ENCODE measurements at regions of chr11 and their contacts with region 1.

Region 1: DNA sequence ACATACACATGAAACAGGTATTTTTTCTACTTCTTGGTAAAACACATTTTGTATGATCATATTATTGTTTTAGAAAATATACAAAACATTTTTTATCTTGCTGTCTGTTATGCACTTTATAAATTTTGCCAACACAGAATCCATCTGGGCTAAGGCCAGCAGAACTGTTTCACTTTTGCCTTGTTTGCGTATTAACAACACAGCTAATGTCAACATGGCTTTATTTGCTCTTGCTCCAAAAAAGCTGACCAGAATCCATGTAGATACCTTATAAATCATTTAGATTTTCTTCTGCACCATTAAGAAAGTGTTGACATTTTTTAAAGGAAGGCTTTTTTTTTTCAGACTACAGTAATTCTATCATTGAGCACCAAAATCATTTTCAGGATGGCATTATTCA is 58.1 kb upstream of the PGR start:
- DNase-seq: no peak
- H3K4me3 ChIP-seq: no peak overlapping the region
- H3K4me3 Mint-ChIP-seq: no peak overlapping the region
- H3K27ac ChIP-seq: no peak overlapping the region
- H3K27ac Mint-ChIP-seq: no peak overlapping the region
- H3K4me1 ChIP-seq: no peaks in the 10 kb centered on the region
- H3K4me1 Mint-ChIP-seq: no peaks in the 10 kb centered on the region
- H3K27me3 ChIP-seq: no peaks in the 10 kb centered on the region
- H3K27me3 Mint-ChIP-seq: peaks cover 0 to 2% (median 0%) of the 10 kb centered on the region in 3 donors
- CTCF ChIP-seq: no peak

Region 2: DNA sequence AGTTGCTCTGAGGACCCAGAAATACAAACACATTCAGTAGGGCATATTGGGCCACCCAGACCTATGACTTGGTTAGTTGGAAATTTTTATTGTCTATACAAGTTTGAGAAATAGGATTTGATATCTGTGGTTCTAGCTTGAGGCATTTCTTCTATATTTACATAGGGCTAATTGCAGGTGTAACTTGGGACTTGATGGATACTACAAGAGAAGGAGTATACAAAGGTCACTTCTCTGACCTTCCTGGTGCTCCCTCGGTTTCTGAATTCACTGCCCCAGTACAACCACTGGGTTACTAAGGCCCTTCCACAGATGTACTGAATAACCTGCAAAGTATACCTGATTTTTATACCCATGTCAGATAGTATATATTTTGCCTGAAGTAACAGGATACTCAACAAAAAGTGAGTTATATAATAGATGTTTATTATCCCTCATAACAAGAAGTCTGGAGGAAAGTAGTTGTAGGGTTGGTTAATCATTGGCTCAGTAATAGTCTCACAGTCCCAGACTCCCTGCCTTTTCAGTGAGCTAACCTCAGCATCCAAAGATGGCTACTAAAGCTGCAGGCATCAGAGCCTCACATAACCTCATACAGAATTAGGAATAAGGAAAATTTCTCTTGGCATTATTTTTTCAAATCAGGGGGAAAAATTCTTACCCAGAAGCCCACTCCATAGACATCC is 49.4 kb before region 1 on chr11:
- intact Hi-C with region 1: no loop called
- DNase-seq: no peak
- H3K4me3 ChIP-seq: no peak overlapping the region
- H3K4me3 Mint-ChIP-seq: no peak overlapping the region
- H3K27ac ChIP-seq: no peak overlapping the region
- H3K27ac Mint-ChIP-seq: no peak overlapping the region
- H3K4me1 ChIP-seq: no peaks in the 10 kb centered on the region
- H3K4me1 Mint-ChIP-seq: no peaks in the 10 kb centered on the region
- H3K27me3 ChIP-seq: no peaks in the 10 kb centered on the region
- H3K27me3 Mint-ChIP-seq: peaks cover 0 to 4% (median 0%) of the 10 kb centered on the region in 3 donors
- CTCF ChIP-seq: no peak

Region 3: GRCh38 chr11:101169944-101170343 is 17.8 kb before region 1 on chr11:
- intact Hi-C with region 1: loop called in 1 of 2 experiments (anchors 2 kb)
- DNase-seq: no peak
- H3K4me3 ChIP-seq: no peak overlapping the region
- H3K4me3 Mint-ChIP-seq: no peak overlapping the region
- H3K27ac ChIP-seq: no peak overlapping the region
- H3K27ac Mint-ChIP-seq: no peak overlapping the region
- H3K4me1 ChIP-seq: no peaks in the 10 kb centered on the region
- H3K4me1 Mint-ChIP-seq: no peaks in the 10 kb centered on the region
- H3K27me3 ChIP-seq: no peaks in the 10 kb centered on the region
- H3K27me3 Mint-ChIP-seq: peaks cover 0 to 2% (median 0%) of the 10 kb centered on the region in 3 donors
- CTCF ChIP-seq: no peak

Measured in CD14-positive monocyte (primary cell).